ENCODE measurements at regions of chr20 and their contacts with region 1.

Region 1: GRCh38 chr20:10469599-10469998 is 34.5 kb downstream of the SLX4IP start:
- DNase-seq: peak; percentile 19
- H3K4me3 Mint-ChIP-seq: no peak overlapping the region
- H3K27ac Mint-ChIP-seq: no peak overlapping the region
- H3K4me1 Mint-ChIP-seq: peaks cover 9% of the 10 kb centered on the region
- H3K27me3 Mint-ChIP-seq: no peaks in the 10 kb centered on the region

Region 2: DNA sequence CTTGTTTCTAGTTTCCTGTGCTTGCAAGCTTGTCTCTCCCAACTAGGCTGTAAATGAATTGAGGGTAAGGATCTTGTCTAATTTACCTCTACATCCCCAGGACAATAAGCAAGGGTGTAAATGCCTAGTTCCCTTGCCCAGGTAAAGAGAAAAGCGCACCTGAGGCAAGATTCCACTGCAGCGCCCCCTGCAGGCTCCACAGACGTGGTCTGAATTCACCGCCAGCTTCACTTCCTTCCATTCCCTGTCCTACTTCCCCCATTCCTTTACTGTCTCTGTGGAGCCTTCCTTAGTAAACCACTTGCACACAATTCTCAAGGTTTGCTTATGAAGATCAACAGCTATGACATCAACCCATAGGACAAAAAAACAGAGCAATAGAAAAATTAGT is 392.5 kb before region 1 on chr20:
- CTCF ChIA-PET with region 1: no interaction called
- intact Hi-C with region 1: no loop called
- DNase-seq: peak; percentile 10
- H3K4me3 Mint-ChIP-seq: no peak overlapping the region
- H3K27ac Mint-ChIP-seq: no peak overlapping the region
- H3K4me1 Mint-ChIP-seq: no peaks in the 10 kb centered on the region
- H3K27me3 Mint-ChIP-seq: peaks cover 29% of the 10 kb centered on the region

Region 3: DNA sequence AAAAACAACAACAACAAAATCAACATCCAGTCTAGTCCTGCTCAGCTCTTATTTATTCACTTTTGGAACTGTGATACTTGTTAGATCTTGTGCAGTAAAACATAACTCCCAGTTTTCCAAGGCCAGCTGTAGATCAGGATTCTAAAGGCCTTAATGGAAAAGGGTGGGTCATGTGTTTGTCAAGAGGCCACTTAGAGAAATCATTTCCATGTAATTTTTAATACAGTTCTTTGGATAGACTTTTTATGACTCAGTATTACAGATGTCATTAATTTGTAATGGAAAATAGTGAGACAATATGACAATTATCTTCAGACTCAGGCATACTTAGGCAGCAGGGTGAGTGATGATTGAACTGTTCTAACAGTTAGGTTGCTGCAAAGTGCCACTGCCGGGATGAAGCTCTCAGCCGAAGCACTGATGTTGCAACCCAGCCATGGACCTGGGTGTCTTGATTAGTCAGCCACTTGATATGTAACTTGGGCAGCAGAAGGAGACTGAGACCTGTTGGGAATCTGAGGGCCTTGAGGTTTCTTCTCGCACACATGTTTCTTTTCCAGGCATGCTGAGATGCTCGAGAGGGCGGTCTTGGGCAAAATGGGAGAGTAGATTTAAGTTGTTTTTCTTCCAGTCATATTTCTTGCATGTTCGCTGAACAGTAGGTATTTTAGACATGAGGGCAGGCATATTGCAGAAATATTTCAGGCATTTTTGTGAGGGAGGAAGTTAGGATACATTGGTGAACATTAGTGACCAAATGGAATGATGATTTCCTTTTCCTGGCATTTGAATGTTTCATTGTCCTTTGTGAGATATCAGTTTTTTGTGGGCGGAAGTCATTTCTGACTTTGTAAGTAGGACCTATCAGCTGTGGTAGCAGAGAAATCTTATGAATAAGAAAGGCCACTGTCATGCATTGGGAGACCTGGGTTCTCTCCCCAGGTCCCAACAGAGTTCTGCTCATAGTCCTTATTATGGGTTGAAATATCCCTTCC is 17.8 kb after region 1 on chr20:
- CTCF ChIA-PET with region 1: no interaction called
- intact Hi-C with region 1: no loop called
- DNase-seq: no peak
- H3K4me3 Mint-ChIP-seq: no peak overlapping the region
- H3K27ac Mint-ChIP-seq: no peak overlapping the region
- H3K4me1 Mint-ChIP-seq: peaks cover 26% of the 10 kb centered on the region
- H3K27me3 Mint-ChIP-seq: no peaks in the 10 kb centered on the region

Region 4: GRCh38 chr20:10536531-10536930 is 66.9 kb after region 1 on chr20:
- CTCF ChIA-PET with region 1: no interaction called
- intact Hi-C with region 1: loop called (anchors 1 kb)
- DNase-seq: peak; percentile 41
- H3K4me3 Mint-ChIP-seq: no peak overlapping the region
- H3K27ac Mint-ChIP-seq: no peak overlapping the region
- H3K4me1 Mint-ChIP-seq: peaks cover 18% of the 10 kb centered on the region
- H3K27me3 Mint-ChIP-seq: no peaks in the 10 kb centered on the region

Region 5: DNA sequence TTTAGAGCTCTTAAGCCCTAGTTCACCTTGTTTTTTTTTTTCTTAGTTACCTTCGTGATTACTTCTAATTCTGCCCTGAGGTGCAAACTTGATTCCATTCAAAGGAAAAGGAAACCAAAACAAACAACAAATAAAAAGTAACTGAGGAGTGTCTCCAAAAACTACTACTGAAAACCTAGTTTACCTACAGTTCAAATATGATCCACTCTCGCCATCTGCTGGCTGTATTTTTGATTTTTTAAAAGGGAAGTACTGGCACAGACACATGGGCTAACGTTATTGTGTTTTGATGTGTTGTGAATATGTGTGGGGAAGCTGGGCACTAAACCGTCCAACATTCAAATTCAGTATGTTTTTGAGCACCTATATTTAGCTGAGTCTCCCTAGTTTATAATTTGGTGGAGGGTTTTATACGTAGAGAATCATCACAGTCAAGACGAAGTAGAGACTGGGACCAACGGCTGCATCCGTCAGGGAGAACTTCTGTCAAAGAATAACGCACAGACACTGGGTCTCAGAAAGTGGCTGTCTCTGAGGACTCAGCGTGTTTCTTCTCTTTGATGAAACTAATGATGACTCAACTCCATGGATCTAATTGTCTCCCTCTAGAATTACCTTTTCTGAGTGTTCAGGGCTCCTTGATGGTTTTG is 1074.6 kb after region 1 on chr20:
- CTCF ChIA-PET with region 1: no interaction called
- intact Hi-C with region 1: loop called (anchors 10 kb)
- DNase-seq: peak; percentile 35
- H3K4me3 Mint-ChIP-seq: no peak overlapping the region
- H3K27ac Mint-ChIP-seq: no peak overlapping the region
- H3K4me1 Mint-ChIP-seq: no peaks in the 10 kb centered on the region
- H3K27me3 Mint-ChIP-seq: peaks cover 4% of the 10 kb centered on the region